GM12878 (cell line): ENCODE measurements at regions of chr18 and their contacts with region 1.

Region 1: GRCh38 chr18:35949903-35950627 is 22.4 kb upstream of the RMP24 start:
- DNase-seq: no peak
- ATAC-seq: peak; percentile 85
- H3K4me3 ChIP-seq: no peak overlapping the region
- H3K27ac ChIP-seq: no peak overlapping the region
- H3K4me1 ChIP-seq: no peaks in the 10 kb centered on the region
- H3K27me3 ChIP-seq: no peaks in the 10 kb centered on the region
- CTCF ChIP-seq: peak; percentile 82 to 91 (median 85)
- EP300 ChIP-seq: no peak
- POLR2A ChIP-seq: no peak
- RAD21 ChIP-seq: peak; percentile 73

Region 2: DNA sequence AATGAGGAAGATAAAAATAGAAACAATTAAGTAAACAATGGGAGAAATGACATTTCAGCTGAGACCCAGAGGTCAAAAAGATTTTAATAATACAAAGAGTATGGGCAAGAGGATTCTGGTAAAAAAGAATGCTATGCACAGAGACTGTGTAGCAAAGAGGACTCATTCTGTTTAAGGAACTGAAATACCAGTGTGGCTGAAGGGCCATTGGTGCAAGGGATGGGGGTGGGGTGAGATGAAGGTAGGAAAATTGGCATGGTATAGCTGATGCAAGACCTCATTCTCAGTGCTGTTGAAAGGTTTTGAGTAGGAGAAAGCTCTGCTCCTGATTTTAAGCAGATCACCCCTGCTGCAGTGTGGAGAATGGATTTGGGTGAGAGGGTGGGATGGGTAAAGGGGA is 357.8 kb before region 1 on chr18:
- CTCF ChIA-PET with region 1: interaction called, 3 read pairs
- POLR2A ChIA-PET with region 1: no interaction called
- RAD21 ChIA-PET with region 1: no interaction called
- SMC1A ChIA-PET with region 1: no interaction called
- in situ Hi-C with region 1: no loop called
- intact Hi-C with region 1: loop called (anchors 5 kb)
- DNase-seq: peak; percentile 75
- ATAC-seq: peak; percentile 98
- H3K4me3 ChIP-seq: no peak overlapping the region
- H3K27ac ChIP-seq: peak overlapping the region; percentile 56
- H3K4me1 ChIP-seq: peaks cover 23% of the 10 kb centered on the region
- H3K27me3 ChIP-seq: no peaks in the 10 kb centered on the region
- CTCF ChIP-seq: no peak
- EP300 ChIP-seq: peak in 1 of 2 experiments; percentile 75; a peak in 2 of 4 replicates
- POLR2A ChIP-seq: no peak
- RAD21 ChIP-seq: no peak

Region 3: GRCh38 chr18:35756506-35757117 is 193.5 kb before region 1 on chr18:
- CTCF ChIA-PET with region 1: interaction called, 30 read pairs
- POLR2A ChIA-PET with region 1: no interaction called
- RAD21 ChIA-PET with region 1: interaction called, 9 read pairs
- SMC1A ChIA-PET with region 1: interaction called, 21 read pairs
- in situ Hi-C with region 1: loop called (anchors 5 kb)
- intact Hi-C with region 1: loop called (anchors 1 kb)
- DNase-seq: no peak
- ATAC-seq: peak; percentile 93
- H3K4me3 ChIP-seq: no peak overlapping the region
- H3K27ac ChIP-seq: no peak overlapping the region
- H3K4me1 ChIP-seq: no peaks in the 10 kb centered on the region
- H3K27me3 ChIP-seq: peaks cover 0 to 2% of the 10 kb centered on the region in 2 experiments; a peak in 2 of 4 replicates
- CTCF ChIP-seq: peak; percentile 51 to 84 (median 53); a peak in 5 of 6 replicates
- EP300 ChIP-seq: no peak
- POLR2A ChIP-seq: no peak
- RAD21 ChIP-seq: peak; percentile 92

Region 4: DNA sequence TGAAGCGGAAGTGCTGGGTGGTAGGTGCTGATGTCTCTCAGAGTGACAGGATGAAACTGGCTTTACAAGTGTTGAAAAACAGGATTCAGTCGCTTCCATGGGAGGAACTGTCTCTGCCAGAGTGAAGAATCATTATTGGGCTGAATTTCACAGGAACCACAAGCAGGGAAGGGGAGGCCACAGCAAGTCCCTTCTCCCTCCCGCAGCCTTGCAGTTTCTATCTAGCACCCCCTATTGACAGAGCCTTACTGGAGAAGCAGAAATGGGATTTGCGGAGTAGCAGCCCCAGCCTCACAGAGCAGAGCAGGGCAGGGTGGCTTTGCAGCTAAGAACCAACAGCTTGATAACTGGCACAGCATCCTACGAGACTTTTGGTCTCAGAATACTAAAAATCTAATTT is 10.9 kb before region 1 on chr18:
- CTCF ChIA-PET with region 1: interaction called, 17 read pairs
- POLR2A ChIA-PET with region 1: no interaction called
- RAD21 ChIA-PET with region 1: interaction called, 7 read pairs
- SMC1A ChIA-PET with region 1: interaction called, 5 read pairs
- in situ Hi-C with region 1: no loop called
- intact Hi-C with region 1: no loop called
- DNase-seq: no peak
- ATAC-seq: no peak
- H3K4me3 ChIP-seq: no peak overlapping the region
- H3K27ac ChIP-seq: no peak overlapping the region
- H3K4me1 ChIP-seq: no peaks in the 10 kb centered on the region
- H3K27me3 ChIP-seq: peaks cover 0 to 1% of the 10 kb centered on the region in 2 experiments; a peak in 2 of 4 replicates
- CTCF ChIP-seq: peak; percentile 17 to 21 (median 19); a peak in 2 of 6 replicates
- EP300 ChIP-seq: no peak
- POLR2A ChIP-seq: no peak
- RAD21 ChIP-seq: peak; percentile 10; the same call in 1 of the 2 replicates

Region 5: GRCh38 chr18:36187835-36188721 is 238.0 kb after region 1 on chr18:
- CTCF ChIA-PET with region 1: no interaction called
- POLR2A ChIA-PET with region 1: no interaction called
- RAD21 ChIA-PET with region 1: no interaction called
- SMC1A ChIA-PET with region 1: no interaction called
- in situ Hi-C with region 1: no loop called
- intact Hi-C with region 1: no loop called
- DNase-seq: no peak
- ATAC-seq: peak; percentile 20
- H3K4me3 ChIP-seq: peak overlapping the region; percentile 90
- H3K27ac ChIP-seq: no peak overlapping the region
- H3K4me1 ChIP-seq: peaks cover 9% of the 10 kb centered on the region; the same call in 1 of the 2 replicates
- H3K27me3 ChIP-seq: no peaks in the 10 kb centered on the region
- CTCF ChIP-seq: no peak
- EP300 ChIP-seq: no peak
- POLR2A ChIP-seq: no peak
- RAD21 ChIP-seq: no peak